ENCODE measurements at regions of chr11 and their contacts with region 1.

Region 1: DNA sequence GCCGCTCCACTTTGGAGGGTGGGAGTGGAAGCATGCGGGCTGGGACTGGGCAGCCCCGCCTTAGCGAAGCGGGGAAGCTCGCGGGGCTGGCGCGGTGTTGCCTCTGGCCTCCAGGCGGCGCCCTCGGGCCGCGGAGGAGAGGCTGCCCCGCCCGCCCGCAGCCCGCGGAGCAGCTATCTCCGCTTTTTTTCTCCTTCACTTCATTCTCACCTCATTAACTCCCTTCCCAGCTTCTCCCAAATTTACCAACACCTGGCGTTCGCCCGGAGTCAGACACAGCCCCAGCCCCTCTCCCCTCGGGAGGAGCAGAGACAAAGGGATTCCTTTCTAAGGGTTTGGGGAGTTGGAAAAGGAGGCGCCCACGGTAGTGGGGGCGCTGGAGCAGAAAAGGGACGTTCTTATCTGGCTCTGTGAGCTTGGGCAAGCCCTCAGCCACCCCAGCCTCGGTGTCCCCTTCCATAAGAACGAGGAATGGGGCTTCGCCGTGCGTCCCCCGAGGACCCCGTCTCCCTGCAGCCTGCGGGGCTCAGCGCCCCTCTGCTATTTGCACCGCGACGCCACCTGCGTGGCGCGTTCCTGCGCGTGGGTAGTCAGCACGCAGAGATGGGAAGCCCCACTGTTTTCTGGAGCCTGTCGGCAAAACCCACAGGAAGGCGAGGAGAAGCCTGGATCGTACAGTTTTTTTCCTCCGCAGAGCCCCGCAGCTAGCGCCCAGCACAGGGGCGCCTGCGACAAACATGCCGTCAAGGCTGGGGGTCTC is 1.5 kb upstream of the WNT11 start:
- DNase-seq: peak; percentile 90
- ATAC-seq: peak; percentile 87
- H3K4me3 ChIP-seq: peak overlapping the region; percentile 63
- H3K27ac ChIP-seq: no peak overlapping the region
- H3K4me1 ChIP-seq: peaks cover 27% of the 10 kb centered on the region
- H3K27me3 ChIP-seq: peaks cover 29% of the 10 kb centered on the region
- CTCF ChIP-seq: peak; percentile 98

Region 2: GRCh38 chr11:75907906-75908527 is 299.8 kb before region 1 on chr11:
- intact Hi-C with region 1: no loop called
- DNase-seq: no peak
- ATAC-seq: no peak
- H3K4me3 ChIP-seq: no peak overlapping the region
- H3K27ac ChIP-seq: no peak overlapping the region
- H3K4me1 ChIP-seq: peaks cover 7% of the 10 kb centered on the region
- H3K27me3 ChIP-seq: no peaks in the 10 kb centered on the region
- CTCF ChIP-seq: no peak

Region 3: GRCh38 chr11:75938543-75938942 is 269.3 kb before region 1 on chr11:
- intact Hi-C with region 1: no loop called
- DNase-seq: no peak
- ATAC-seq: no peak
- H3K4me3 ChIP-seq: no peak overlapping the region
- H3K27ac ChIP-seq: no peak overlapping the region
- H3K4me1 ChIP-seq: no peaks in the 10 kb centered on the region
- H3K27me3 ChIP-seq: no peaks in the 10 kb centered on the region
- CTCF ChIP-seq: no peak

Region 4: GRCh38 chr11:76074148-76075095 is 133.4 kb before region 1 on chr11:
- intact Hi-C with region 1: no loop called
- DNase-seq: no peak
- ATAC-seq: no peak
- H3K4me3 ChIP-seq: no peak overlapping the region
- H3K27ac ChIP-seq: no peak overlapping the region
- H3K4me1 ChIP-seq: peaks cover 37% of the 10 kb centered on the region
- H3K27me3 ChIP-seq: no peaks in the 10 kb centered on the region
- CTCF ChIP-seq: no peak

Region 5: DNA sequence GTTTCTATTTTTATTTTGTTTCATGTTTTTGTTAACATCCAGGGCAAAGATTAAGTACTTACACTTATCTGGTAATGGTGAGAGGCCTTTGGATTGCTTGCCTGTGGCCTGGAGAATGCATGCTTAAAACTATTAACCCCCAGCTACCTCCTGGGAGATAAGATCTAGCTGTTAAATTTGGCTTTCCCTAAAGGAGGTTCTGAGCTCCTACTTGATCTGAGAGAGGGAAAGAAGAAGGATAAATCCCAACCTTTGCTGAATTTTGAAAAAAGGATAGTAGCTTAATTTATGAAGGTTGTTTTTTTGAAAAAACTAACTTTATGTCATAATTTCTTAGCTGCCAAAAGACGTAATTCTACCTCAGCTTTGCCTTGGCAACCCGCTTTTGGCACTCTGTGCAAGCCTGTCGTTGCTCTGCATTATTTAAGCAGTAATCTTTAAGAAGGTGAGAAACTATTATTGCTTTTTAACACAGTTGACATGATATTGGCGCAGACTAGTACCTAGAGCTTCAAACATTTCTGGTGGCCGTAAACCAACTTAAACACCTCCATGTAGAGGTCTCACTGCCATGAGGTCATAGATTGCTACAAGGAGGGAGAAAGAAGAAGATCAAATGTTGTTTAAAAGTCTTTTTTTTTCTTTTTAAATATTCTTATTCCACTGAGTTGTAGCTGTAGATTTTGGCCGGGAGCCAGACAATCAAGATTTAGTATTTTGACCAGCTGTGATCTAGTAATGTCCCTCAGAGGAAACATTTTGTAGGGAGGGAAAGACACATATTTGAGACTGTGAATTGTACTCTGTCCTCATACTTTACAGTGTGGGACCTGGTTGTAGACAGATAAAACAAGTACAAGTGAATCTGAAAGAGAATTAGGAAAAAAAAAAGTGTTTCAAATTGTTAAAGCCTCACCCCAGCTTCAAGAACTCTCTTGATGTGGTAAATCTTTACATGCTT is 75.9 kb before region 1 on chr11:
- intact Hi-C with region 1: no loop called
- DNase-seq: no peak
- ATAC-seq: no peak
- H3K4me3 ChIP-seq: no peak overlapping the region
- H3K27ac ChIP-seq: peak overlapping the region; percentile 48
- H3K4me1 ChIP-seq: peaks cover 22% of the 10 kb centered on the region
- H3K27me3 ChIP-seq: no peaks in the 10 kb centered on the region
- CTCF ChIP-seq: no peak

Region 6: GRCh38 chr11:76318744-76319384 is 111.0 kb after region 1 on chr11:
- intact Hi-C with region 1: loop called (anchors 5 kb)
- DNase-seq: peak; percentile 91
- ATAC-seq: peak; percentile 92
- H3K4me3 ChIP-seq: no peak overlapping the region
- H3K27ac ChIP-seq: no peak overlapping the region
- H3K4me1 ChIP-seq: no peaks in the 10 kb centered on the region
- H3K27me3 ChIP-seq: peaks cover 5% of the 10 kb centered on the region
- CTCF ChIP-seq: peak; percentile 90

Measured in upper lobe of right lung (tissue), 1 donor.